ENCODE measurements at regions of chr3 and their contacts with region 1.

Region 1: DNA sequence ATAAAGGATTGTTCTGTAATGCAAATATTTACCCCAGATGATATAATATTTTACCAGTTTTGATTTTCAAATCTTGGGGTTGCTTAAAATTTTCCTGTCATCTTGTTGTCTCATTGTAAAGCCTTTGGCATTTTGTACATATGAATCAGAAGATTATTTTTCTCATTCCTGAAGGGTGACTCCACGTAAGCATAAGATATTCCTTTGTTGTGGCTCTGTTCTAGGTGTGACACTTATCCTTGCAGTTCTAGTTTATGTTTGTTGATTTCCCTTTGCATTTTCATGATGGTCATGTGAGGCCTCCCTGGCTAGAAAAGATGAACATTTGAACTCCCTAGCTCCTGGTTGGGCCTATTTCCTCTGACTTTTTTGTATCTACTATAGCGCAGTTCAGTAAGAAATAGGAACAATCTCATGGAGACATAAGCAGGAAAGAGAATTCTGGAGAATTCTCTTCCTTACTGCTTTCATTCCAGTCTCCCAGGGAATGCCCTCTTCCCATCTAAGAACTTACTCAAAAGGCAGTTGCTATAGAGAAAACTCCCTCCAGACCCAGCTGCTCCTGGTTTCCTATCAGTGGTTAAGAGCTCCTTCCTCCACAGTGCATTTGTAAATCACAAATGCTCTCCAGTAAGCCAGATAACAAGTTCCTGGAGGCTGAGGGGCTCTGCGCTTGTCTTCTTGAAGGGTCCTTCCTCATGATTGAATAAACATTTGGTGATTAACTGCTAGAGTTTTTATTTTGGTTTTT is 124.7 kb downstream of the WNT5A start:
- DNase-seq: peak; percentile 23 to 85
- H3K4me3 ChIP-seq: no peak overlapping the region
- H3K27ac ChIP-seq: peak overlapping the region; percentile 60
- H3K4me1 ChIP-seq: peaks cover 29% of the 10 kb centered on the region
- H3K27me3 ChIP-seq: no peaks in the 10 kb centered on the region
- CTCF ChIP-seq: no peak

Region 2: DNA sequence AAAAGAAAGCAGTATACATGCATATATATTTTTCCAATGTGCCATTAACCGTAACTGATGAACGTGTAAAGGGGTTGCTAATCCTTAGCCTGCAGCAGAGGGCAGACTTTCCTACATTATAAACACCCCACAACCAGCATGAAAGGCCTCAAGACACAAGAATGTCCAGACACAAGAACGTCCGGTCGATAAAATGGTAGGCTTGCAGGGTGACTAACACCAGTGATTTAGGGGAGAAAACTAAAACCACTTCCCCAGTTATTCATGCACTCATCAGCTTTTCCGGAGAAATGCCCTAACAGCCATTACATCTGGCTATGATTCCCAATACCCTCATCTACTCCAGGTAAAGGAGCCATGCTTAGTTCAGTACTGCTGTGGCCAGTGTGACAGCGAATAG is 492.0 kb before region 1 on chr3:
- CTCF ChIA-PET with region 1: no interaction called
- POLR2A ChIA-PET with region 1: no interaction called
- intact Hi-C with region 1: loop called (anchors 5 kb)
- DNase-seq: peak; percentile 48 to 72
- H3K4me3 ChIP-seq: no peak overlapping the region
- H3K27ac ChIP-seq: no peak overlapping the region; the same call in 1 of the 2 replicates
- H3K4me1 ChIP-seq: peaks cover 17% of the 10 kb centered on the region
- H3K27me3 ChIP-seq: no peaks in the 10 kb centered on the region
- CTCF ChIP-seq: peak; percentile 68

Region 3: DNA sequence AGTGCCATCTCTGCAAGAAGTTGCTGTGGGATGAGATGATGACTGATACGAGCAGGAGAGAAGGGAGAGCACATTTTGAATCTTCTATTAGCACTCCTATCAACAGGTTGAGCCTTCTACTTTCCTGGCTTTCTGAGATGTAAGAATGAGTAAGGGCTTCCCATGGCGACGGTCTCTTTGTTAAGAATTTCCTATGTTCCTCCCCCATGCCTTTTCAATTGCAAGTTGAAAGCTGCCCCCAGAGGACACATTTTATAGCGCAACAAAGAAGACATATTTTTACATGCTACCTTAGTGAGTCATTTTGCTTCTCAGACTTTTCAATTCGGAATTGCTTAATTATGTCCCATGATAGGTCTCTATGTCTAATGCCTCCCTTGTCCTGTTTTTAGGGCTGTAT is 363.2 kb before region 1 on chr3:
- CTCF ChIA-PET with region 1: no interaction called
- POLR2A ChIA-PET with region 1: no interaction called
- intact Hi-C with region 1: loop called (anchors 2 kb)
- DNase-seq: peak; percentile 33 to 71
- H3K4me3 ChIP-seq: no peak overlapping the region
- H3K27ac ChIP-seq: no peak overlapping the region
- H3K4me1 ChIP-seq: peaks cover 4% of the 10 kb centered on the region; the same call in 1 of the 2 replicates
- H3K27me3 ChIP-seq: no peaks in the 10 kb centered on the region
- CTCF ChIP-seq: peak; percentile 48; the same call in 1 of the 2 replicates

Region 4: DNA sequence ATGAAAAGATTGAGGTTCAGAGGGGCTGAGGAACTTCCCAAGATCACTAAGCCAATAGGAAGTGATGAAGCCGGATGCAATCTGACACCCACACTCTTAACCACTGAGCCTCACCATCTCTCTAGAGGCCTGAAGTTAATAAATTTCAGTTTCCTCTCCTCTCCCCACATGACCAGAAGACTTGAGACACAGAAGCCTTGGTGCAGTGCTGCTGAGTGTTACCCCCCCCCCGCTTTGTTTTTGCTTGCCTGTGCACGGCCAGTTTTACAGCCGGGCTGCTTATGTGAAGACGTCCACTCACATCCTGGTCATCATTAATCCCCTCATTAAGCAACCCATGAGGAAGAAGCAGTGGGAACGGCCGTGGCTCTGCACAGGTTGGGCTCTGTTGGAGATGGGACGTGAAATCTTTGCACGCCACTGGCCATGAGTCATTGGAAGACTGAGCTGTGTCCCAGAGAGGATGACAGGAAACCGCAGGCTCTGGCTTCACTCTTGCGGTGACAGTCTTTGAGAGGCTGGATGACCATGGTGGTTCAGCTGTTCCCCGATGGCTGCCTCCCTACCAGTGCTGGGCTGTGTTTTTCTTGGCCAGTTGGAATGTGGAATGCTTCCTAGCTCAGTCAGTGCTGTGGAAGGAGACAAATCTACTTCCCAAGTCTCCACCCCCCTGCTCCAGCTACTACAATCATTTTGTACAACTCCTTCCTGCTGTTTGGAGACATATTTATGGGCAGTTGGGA is 202.0 kb before region 1 on chr3:
- CTCF ChIA-PET with region 1: no interaction called
- POLR2A ChIA-PET with region 1: interaction called, 9 read pairs
- intact Hi-C with region 1: loop called (anchors 1 kb)
- DNase-seq: peak; percentile 81 to 87
- H3K4me3 ChIP-seq: 0 out of 2 replicates have a peak overlapping the region, but pooled peaks have one; percentile 7
- H3K27ac ChIP-seq: peak overlapping the region; percentile 57
- H3K4me1 ChIP-seq: peaks cover 15% of the 10 kb centered on the region
- H3K27me3 ChIP-seq: no peaks in the 10 kb centered on the region
- CTCF ChIP-seq: no peak

Region 5: GRCh38 chr3:55330355-55330754 is 32.0 kb before region 1 on chr3:
- CTCF ChIA-PET with region 1: no interaction called
- POLR2A ChIA-PET with region 1: interaction called, 10 read pairs
- intact Hi-C with region 1: loop called (anchors 1 kb)
- DNase-seq: peak; percentile 70 to 96
- H3K4me3 ChIP-seq: no peak overlapping the region
- H3K27ac ChIP-seq: peak overlapping the region; percentile 53
- H3K4me1 ChIP-seq: peaks cover 19% of the 10 kb centered on the region
- H3K27me3 ChIP-seq: no peaks in the 10 kb centered on the region
- CTCF ChIP-seq: no peak

Region 6: GRCh38 chr3:55467099-55467498 is 104.7 kb after region 1 on chr3:
- CTCF ChIA-PET with region 1: no interaction called
- POLR2A ChIA-PET with region 1: no interaction called
- intact Hi-C with region 1: loop called (anchors 5 kb)
- DNase-seq: peak in 1 of 2 experiments; percentile 43
- H3K4me3 ChIP-seq: no peak overlapping the region
- H3K27ac ChIP-seq: no peak overlapping the region
- H3K4me1 ChIP-seq: no peaks in the 10 kb centered on the region
- H3K27me3 ChIP-seq: no peaks in the 10 kb centered on the region
- CTCF ChIP-seq: no peak

Region 7: DNA sequence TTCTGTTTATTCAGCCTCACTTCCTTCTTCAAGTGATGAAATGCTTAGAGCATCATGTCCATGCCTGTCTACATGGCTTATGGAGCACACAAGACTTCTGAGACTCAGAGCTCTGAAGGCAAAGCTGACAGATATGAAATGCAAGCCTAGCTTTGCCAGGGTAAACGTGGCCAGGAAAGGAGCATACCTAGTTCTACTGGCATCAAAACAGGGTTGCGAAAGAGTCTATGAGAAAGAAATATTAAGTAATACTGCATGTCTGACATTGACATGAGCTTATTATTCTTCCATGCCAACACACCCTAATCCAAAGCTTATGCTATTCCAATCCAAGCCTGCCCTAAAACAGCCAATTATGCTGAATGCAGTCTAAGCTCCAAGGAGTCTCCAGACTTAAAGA is 714.4 kb after region 1 on chr3:
- CTCF ChIA-PET with region 1: no interaction called
- POLR2A ChIA-PET with region 1: no interaction called
- intact Hi-C with region 1: no loop called
- DNase-seq: no peak
- H3K4me3 ChIP-seq: no peak overlapping the region
- H3K27ac ChIP-seq: no peak overlapping the region
- H3K4me1 ChIP-seq: no peaks in the 10 kb centered on the region
- H3K27me3 ChIP-seq: no peaks in the 10 kb centered on the region
- CTCF ChIP-seq: no peak

Measured in PC-9 (cell line).